ENCODE measurements at regions of chr17 and their contacts with region 1.

Region 1: GRCh38 chr17:50783193-50783660 is 15.9 kb upstream of the ANKRD40CL start:
- ATAC-seq: peak; percentile 76 to 95 (median 90)
- H3K4me3 ChIP-seq: no peak overlapping the region
- H3K27ac ChIP-seq: no peak overlapping the region
- H3K4me1 ChIP-seq: no peaks in the 10 kb centered on the region

Region 2: GRCh38 chr17:50834429-50835300 is 51.4 kb after region 1 on chr17:
- in situ Hi-C with region 1: loop called in 3 of 9 experiments (anchors 10 kb)
- ATAC-seq: peak in 4 of 8 experiments; percentile 3 to 24 (median 14)
- H3K4me3 ChIP-seq: no peak overlapping the region
- H3K27ac ChIP-seq: no peak overlapping the region
- H3K4me1 ChIP-seq: peaks cover 56 to 61% of the 10 kb centered on the region in 2 donors

Region 3: DNA sequence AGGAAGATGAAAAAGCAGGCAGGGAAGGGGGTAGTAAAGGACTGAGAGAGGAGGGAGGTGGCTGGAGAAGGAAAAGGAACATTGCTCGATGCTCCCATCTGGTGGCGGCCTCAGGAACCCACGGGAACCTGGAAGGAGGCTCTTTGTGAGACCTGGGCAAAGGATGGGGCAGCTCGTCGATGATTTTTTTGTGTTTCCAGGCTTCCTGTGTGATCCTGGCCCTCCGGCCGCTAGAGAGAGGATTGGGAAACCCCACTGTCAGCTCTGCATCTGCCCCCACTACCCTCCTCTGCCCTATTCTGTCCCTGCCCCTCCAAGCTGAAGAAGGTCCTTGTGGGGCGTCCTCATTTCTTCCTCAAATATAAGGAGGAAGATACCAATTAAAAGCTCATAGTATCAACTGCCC is 58.7 kb after region 1 on chr17:
- in situ Hi-C with region 1: loop called in 5 of 9 experiments (anchors 5 to 10 kb)
- ATAC-seq: peak; percentile 59 to 95 (median 88)
- H3K4me3 ChIP-seq: no peak overlapping the region
- H3K27ac ChIP-seq: no peak overlapping the region
- H3K4me1 ChIP-seq: peaks cover 9 to 15% of the 10 kb centered on the region in 2 donors

Region 4: GRCh38 chr17:52079496-52079895 is 1296.3 kb after region 1 on chr17:
- in situ Hi-C with region 1: no loop called
- ATAC-seq: peak in 1 of 8 experiments; percentile 25
- H3K4me3 ChIP-seq: no peak overlapping the region
- H3K27ac ChIP-seq: no peak overlapping the region
- H3K4me1 ChIP-seq: no peaks in the 10 kb centered on the region

Measured in motor neuron (in vitro differentiated cells).